ENCODE measurements at regions of chr2 and their contacts with region 1.

Region 1: GRCh38 chr2:168346725-168347477 is 99.5 kb upstream of the STK39 start:
- DNase-seq: peak in 5 of 6 donors; percentile 46 to 76 (median 60)
- ATAC-seq: peak; percentile 82 to 93 (median 89)
- H3K4me3 ChIP-seq: peak overlapping the region in 2 of 4 donors; percentile 36 to 44
- H3K27ac ChIP-seq: peak overlapping the region in 2 of 4 donors; percentile 34 to 58
- H3K4me1 ChIP-seq: peaks cover 12 to 18% (median 17%) of the 10 kb centered on the region in 3 donors
- H3K27me3 ChIP-seq: no peaks in the 10 kb centered on the region
- CTCF ChIP-seq: peak; percentile 46 to 79 (median 69)

Region 2: GRCh38 chr2:168060986-168061750 is 285.7 kb before region 1 on chr2:
- intact Hi-C with region 1: no loop called
- DNase-seq: no peak
- ATAC-seq: peak in 3 of 4 donors; percentile 50 to 56 (median 56)
- H3K4me3 ChIP-seq: no peak overlapping the region
- H3K27ac ChIP-seq: no peak overlapping the region
- H3K4me1 ChIP-seq: peaks cover 0 to 3% (median 3%) of the 10 kb centered on the region in 3 donors
- H3K27me3 ChIP-seq: no peaks in the 10 kb centered on the region
- CTCF ChIP-seq: no peak

Region 3: DNA sequence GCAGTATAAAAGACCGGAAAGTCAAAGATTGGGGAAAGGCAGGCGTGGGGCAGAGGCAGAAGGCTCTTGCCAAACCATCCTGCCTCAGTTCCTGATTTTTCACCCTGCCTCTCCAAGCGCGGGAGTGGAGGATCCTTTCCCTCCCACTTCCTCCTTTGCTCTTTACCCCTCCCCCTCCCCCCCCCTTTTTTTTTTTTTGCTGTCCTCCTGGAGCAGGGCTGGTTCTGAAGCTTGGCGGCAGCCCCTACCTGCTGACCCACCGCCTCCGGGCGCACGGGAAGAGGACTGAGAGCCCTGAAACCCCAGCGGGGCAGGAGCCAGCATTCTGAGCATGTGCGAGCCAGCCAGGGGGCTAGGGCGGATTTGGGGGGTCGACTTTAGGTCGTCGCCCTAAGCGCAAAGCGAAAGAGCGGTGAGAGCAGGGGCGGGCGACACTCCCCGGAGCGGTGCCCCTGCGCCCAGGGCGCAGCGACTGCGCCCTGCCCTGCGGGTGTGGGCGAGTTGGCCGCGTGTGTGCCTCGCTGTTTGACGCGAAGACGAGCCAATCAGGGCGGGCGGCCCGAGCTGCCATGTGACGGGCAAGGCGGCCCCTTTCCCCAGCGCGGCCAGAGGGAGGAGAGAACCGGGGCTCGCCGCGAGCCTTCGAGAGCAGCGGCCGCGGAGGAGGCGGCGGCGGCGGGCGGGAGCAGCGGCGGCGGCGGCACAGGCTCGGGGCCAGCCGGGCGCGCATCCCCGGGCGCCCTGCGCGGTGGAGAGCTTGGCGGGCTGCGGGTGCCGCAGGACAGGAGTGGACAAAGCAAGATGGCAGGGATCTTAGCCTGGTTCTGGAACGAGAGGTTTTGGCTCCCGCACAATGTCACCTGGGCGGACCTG is 109.0 kb after region 1 on chr2 and contains the start of gene CERS6:
- intact Hi-C with region 1: no loop called
- DNase-seq: peak; percentile 94 to 98 (median 96)
- ATAC-seq: peak; percentile 94 to 98 (median 96)
- H3K4me3 ChIP-seq: peak within 1 kb of the TSS; percentile 58 to 96 (median 90)
- H3K27ac ChIP-seq: peak within 1 kb of the TSS; percentile 39 to 88 (median 71)
- H3K4me1 ChIP-seq: peaks cover 0 to 6% (median 0%) of the 10 kb centered on the region in 3 donors
- H3K27me3 ChIP-seq: no peaks in the 10 kb centered on the region
- CTCF ChIP-seq: no peak
- total RNA-seq, gene CERS6: 4.6 to 18.0 (median 7.6) TPM

Region 4: GRCh38 chr2:168751104-168751740 is 404.3 kb after region 1 on chr2:
- intact Hi-C with region 1: loop called in 2 of 3 experiments (anchors 5 kb)
- DNase-seq: no peak
- ATAC-seq: no peak
- H3K4me3 ChIP-seq: no peak overlapping the region
- H3K27ac ChIP-seq: no peak overlapping the region
- H3K4me1 ChIP-seq: no peaks in the 10 kb centered on the region
- H3K27me3 ChIP-seq: no peaks in the 10 kb centered on the region
- CTCF ChIP-seq: no peak

Region 5: GRCh38 chr2:168758970-168759820 is 412.3 kb after region 1 on chr2:
- intact Hi-C with region 1: loop called in 2 of 3 experiments (anchors 5 kb)
- DNase-seq: peak in 1 of 6 donors; percentile 24
- ATAC-seq: peak; percentile 89 to 98 (median 94)
- H3K4me3 ChIP-seq: no peak overlapping the region
- H3K27ac ChIP-seq: no peak overlapping the region
- H3K4me1 ChIP-seq: no peaks in the 10 kb centered on the region
- H3K27me3 ChIP-seq: no peaks in the 10 kb centered on the region
- CTCF ChIP-seq: peak in 3 of 4 donors; percentile 24 to 56 (median 29)